ENCODE measurements at regions of chr22 and their contacts with region 1.

Region 1: DNA sequence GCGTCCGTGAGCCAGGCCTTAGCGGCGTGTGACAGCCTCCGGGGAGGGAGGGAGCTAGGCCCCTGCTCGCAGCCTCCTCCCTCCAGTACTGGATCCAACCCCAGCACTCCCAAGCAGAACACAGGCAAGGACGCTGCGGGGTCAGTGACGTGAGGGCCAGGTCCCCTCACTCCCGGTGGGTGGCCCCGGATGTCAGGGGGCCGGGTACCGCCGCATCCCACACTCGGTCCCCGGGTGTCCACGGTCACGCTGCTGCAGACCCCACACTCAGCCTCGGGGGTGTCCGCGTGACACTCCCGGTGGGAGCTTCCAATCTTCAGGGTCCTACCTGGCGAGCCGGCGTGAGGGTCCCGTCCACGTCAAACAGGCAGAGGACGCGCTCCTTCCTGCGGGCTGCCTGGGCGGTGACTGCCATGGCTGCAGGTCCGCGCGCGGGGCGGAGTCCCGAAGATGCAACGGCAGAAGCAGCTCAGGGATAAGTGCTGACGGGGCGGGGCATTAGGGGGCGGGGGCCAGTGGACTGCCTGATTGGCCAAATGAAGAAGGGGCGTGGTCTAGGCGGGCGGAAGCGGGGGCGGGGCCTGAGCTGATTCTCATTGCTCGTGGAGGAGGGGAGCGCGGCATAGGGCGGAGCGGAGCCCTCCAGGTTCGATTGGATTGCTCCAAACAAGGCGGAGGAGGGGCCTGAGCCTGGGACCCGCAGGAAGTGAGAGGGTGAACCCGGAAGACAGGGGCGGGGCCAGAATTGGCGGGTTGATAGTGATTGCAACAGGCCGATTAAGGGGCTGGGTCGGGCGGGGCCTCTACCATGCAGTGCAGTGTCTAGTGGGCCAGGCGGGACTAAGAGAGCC is at the start of gene PMM1:
- DNase-seq: peak; percentile 99 to 100
- H3K4me3 ChIP-seq: peak within 1 kb of the TSS; percentile 98
- H3K27ac ChIP-seq: peak within 1 kb of the TSS; percentile 37; the same call in 1 of the 2 replicates
- H3K4me1 ChIP-seq: peaks cover 18% of the 10 kb centered on the region
- H3K27me3 ChIP-seq: no peaks in the 10 kb centered on the region
- CTCF ChIP-seq: no peak
- total RNA-seq, gene PMM1: 49.3 and 53.1 TPM in 2 replicates

Region 2: GRCh38 chr22:40757071-40757470 is 832.5 kb before region 1 on chr22:
- CTCF ChIA-PET with region 1: no interaction called
- POLR2A ChIA-PET with region 1: interaction called, 15 read pairs
- intact Hi-C with region 1: no loop called
- DNase-seq: peak in 1 of 2 experiments; percentile 57
- H3K4me3 ChIP-seq: no peak overlapping the region
- H3K27ac ChIP-seq: no peak overlapping the region
- H3K4me1 ChIP-seq: peaks cover 22% of the 10 kb centered on the region
- H3K27me3 ChIP-seq: no peaks in the 10 kb centered on the region
- CTCF ChIP-seq: no peak

Region 3: DNA sequence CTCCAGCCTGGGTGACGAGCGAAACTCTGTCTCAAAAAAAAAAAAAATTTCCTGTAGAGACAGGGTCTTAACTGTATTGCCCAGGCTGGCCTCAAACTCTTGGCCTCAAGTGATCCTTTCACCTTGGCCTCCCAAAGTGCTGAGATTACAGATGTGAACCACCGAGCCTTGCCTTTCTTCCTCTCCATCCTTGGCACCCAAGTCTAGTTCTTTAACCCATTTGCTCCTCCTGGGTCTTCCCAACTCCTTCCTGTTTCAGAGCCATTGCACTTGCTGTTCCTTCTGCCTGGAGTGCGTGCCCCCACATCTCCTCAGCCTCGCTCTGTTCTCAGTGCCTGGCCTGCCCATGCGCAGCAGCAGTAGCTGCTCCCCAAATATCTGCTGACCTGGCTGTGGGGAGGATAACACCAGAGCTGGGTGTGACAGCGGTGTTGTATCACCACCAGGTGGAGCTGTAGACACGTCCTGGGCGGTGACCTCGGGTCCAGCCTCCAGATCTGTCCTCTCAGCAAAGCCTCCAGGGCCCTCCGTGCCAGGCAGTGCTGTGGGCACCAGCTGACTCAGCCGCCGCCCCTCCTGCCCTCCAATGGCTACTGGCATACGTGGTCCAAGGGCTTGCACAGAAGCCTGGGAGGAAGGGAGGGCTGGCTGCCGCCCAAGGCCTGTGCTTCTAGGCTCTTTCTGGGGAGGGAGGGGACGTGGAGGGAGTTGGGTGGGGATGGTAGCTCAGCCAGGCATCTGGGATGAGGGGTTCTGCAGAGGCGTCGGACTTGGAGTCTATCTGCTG is 185.9 kb before region 1 on chr22:
- CTCF ChIA-PET with region 1: no interaction called
- POLR2A ChIA-PET with region 1: interaction called, 3 read pairs
- intact Hi-C with region 1: loop called (anchors 10 kb)
- DNase-seq: peak; percentile 82 to 83
- H3K4me3 ChIP-seq: no peak overlapping the region
- H3K27ac ChIP-seq: no peak overlapping the region
- H3K4me1 ChIP-seq: peaks cover 13% of the 10 kb centered on the region
- H3K27me3 ChIP-seq: no peaks in the 10 kb centered on the region
- CTCF ChIP-seq: peak; percentile 97

Region 4: GRCh38 chr22:41543854-41544670 is 45.6 kb before region 1 on chr22 and contains the start of gene POLR3H:
- CTCF ChIA-PET with region 1: interaction called, 3 read pairs
- POLR2A ChIA-PET with region 1: interaction called, 30 read pairs
- intact Hi-C with region 1: loop called (anchors 2 kb)
- DNase-seq: peak; percentile 95 to 99
- H3K4me3 ChIP-seq: peak within 1 kb of the TSS; percentile 83
- H3K27ac ChIP-seq: peak within 1 kb of the TSS; percentile 33; the same call in 1 of the 2 replicates
- H3K4me1 ChIP-seq: peaks cover 17% of the 10 kb centered on the region
- H3K27me3 ChIP-seq: no peaks in the 10 kb centered on the region
- CTCF ChIP-seq: peak; percentile 76
- total RNA-seq, gene POLR3H: 47.6 and 49.7 TPM in 2 replicates

Region 5: DNA sequence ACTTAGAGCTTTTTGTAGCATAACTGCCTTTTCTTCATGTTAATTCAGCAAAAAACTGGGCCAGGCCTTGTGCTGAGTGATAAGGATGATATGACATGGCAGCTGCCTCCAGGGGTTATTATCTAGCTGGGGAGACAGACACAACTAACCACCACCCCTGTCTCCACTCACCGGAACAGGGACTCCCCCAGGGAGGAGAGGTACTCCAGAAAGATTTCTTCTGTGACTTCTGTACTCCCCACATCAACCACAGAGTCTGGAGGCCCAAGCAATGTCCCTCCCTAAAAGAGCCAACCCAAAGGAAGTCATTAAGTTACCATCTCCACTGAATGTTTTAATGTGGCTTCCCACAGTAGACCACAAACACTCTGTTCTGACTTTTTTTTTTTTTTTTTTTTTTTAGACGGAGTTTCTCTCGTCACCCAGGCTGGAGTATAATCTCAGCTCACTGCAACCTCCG is 14.3 kb after region 1 on chr22:
- CTCF ChIA-PET with region 1: interaction called, 7 read pairs
- POLR2A ChIA-PET with region 1: interaction called, 14 read pairs
- intact Hi-C with region 1: no loop called
- DNase-seq: no peak
- H3K4me3 ChIP-seq: no peak overlapping the region
- H3K27ac ChIP-seq: no peak overlapping the region
- H3K4me1 ChIP-seq: no peaks in the 10 kb centered on the region
- H3K27me3 ChIP-seq: no peaks in the 10 kb centered on the region
- CTCF ChIP-seq: no peak

Region 6: DNA sequence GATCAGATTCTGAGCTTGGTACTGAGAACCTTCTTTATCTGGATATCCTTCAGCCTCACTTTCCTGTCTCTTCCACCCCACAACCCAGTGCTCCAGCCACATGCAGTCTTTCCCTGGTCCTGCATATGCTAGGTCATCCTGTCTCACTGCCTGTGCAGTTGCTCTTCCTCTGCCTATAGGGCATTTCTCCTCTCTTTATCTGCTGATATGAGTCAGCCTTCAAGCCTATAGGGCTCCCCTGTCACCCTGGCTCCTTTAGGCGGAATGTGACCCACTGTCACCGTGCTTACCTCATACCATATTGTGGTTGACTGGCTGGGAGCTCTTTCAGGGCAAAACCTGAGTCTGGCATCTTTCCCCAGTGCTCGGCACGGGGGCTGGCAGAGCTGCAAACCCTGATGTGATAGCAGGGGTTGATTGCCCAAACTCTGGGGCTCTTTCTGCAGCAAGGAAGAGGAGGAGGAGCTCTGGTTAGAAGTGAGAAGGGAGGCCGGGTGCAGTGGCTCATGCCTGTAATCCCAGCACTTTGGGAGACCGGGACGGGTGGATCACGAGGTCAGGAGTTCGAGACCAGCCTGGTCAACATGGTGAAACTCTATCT is 136.0 kb after region 1 on chr22:
- CTCF ChIA-PET with region 1: no interaction called
- POLR2A ChIA-PET with region 1: no interaction called
- intact Hi-C with region 1: no loop called
- DNase-seq: peak; percentile 72 to 89
- H3K4me3 ChIP-seq: no peak overlapping the region
- H3K27ac ChIP-seq: no peak overlapping the region
- H3K4me1 ChIP-seq: peaks cover 17% of the 10 kb centered on the region
- H3K27me3 ChIP-seq: no peaks in the 10 kb centered on the region
- CTCF ChIP-seq: no peak

Measured in PC-9 (cell line).